ENCODE measurements at regions of chr9 and their contacts with region 1.

Region 1: GRCh38 chr9:7058473-7058872 is 300.7 kb downstream of the KDM4C start:
- DNase-seq: no peak
- H3K4me3 ChIP-seq: no peak overlapping the region
- CTCF ChIP-seq: no peak

Region 2: DNA sequence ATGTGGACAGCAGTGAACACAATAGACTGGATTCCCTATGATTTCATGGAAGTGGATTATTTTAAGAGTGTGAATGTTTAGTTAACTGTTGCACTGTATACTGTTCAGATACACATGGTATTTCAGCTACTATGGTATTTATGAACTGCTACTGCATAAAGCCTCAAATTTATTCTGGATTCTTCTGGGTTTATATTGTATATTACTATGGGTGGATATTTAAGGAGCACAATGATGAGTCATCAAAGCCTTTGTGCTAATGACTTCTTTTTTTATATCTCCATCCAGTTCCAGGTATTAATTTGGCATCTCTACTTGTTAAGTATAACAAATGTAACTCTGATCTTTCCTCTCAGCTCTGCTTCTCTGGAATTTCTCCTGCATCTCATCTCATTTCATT is 293.9 kb before region 1 on chr9:
- CTCF ChIA-PET with region 1: no interaction called
- POLR2A ChIA-PET with region 1: no interaction called
- DNase-seq: no peak
- H3K4me3 ChIP-seq: no peak overlapping the region
- CTCF ChIP-seq: no peak

Region 3: DNA sequence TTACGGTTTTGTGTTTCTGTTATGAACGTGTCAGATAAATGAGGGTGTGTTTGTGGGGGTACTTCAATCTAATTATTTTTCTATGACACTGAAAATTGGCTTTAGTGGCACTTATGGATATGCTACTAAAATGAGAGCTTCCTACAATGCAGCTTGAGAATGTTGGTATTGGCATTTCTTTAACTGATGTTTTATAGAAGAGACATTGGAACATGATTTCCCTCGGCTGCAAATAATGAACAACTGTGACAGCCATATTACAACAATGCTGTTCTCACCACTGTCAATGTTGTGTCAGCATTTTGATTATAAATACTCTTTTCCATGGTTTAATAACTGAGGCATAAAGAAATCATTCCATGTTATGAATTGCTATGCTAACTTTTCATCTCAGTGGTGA is 21.3 kb before region 1 on chr9:
- CTCF ChIA-PET with region 1: interaction called, 12 read pairs
- POLR2A ChIA-PET with region 1: no interaction called
- DNase-seq: no peak
- H3K4me3 ChIP-seq: no peak overlapping the region
- CTCF ChIP-seq: no peak